AG04450 (cell line): ENCODE measurements at regions of chr6 and their contacts with region 1.

Region 1: GRCh38 chr6:39892490-39893129 is 41.7 kb downstream of the MOCS1 start:
- DNase-seq: peak; percentile 36
- H3K4me3 ChIP-seq: no peak overlapping the region
- H3K27ac ChIP-seq: no peak overlapping the region
- H3K27me3 ChIP-seq: no peaks in the 10 kb centered on the region
- CTCF ChIP-seq: peak; percentile 93

Region 2: DNA sequence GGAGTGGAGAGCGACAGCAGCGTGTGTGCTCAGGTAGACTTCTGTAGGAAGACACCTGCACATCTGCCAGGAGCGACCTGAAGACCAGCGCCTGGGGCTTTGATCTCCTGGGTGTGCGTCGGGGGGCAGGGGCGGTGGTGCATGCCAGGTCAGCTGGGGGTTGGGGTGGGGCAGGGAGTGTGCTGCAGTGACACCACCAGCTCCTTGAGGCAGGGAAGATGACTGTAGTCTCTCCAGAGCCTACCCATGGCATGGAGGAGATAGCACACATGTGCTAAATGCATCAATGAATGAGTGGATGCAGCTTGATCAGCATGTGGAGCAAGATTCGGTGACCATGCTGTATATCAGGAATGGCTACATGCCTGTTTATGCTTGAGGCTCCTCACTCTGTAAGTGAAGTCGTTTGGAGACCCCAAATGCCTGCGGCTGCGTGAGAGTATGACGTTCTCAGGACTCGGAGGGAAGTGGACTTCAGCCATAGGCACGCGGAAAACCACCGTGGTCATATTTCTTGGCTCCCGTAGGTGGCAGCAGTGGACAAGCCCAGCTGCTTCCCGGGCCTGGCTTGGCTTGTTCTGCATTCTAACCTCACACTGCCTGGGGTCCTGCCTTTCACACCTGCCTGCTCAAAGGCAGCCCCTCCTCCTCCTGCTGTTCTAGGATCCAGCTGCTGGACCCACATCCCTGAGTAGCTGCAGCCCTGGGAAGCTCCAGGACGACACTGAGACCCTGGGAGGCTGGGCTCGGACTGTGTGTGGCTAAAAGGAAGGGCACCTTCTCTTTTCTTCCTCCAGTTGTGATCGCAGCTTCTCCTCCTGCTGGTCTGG is 530.7 kb before region 1 on chr6:
- CTCF ChIA-PET with region 1: interaction called, 27 read pairs
- POLR2A ChIA-PET with region 1: no interaction called
- DNase-seq: peak; percentile 16
- H3K4me3 ChIP-seq: no peak overlapping the region
- H3K27ac ChIP-seq: no peak overlapping the region
- H3K27me3 ChIP-seq: no peaks in the 10 kb centered on the region
- CTCF ChIP-seq: peak; percentile 87

Region 3: DNA sequence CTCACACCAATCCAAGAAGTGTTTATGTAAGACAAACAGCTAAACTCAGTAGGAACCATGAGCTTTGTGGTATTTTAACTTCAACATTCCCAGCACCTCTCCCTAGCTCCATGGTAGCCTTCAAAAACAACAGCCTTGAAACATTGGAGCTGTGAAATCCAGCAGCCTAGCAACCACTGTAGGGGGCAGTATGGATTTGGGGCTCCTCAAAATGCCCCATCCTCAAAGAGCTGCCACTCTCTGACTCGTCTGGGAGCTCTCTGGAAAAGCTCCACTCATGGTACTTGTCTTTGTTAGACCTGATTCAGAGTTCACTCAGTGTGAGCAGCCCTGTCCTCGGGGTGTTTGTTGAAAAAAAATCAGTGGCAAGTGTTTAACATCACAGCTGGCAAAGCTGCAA is 250.3 kb before region 1 on chr6:
- CTCF ChIA-PET with region 1: no interaction called
- POLR2A ChIA-PET with region 1: no interaction called
- DNase-seq: no peak
- H3K4me3 ChIP-seq: no peak overlapping the region
- H3K27ac ChIP-seq: no peak overlapping the region
- H3K27me3 ChIP-seq: no peaks in the 10 kb centered on the region
- CTCF ChIP-seq: no peak

Region 4: GRCh38 chr6:39904946-39905639 is 12.5 kb after region 1 on chr6:
- CTCF ChIA-PET with region 1: interaction called, 19 read pairs
- POLR2A ChIA-PET with region 1: no interaction called
- DNase-seq: no peak
- H3K4me3 ChIP-seq: no peak overlapping the region
- H3K27ac ChIP-seq: no peak overlapping the region
- H3K27me3 ChIP-seq: no peaks in the 10 kb centered on the region
- CTCF ChIP-seq: no peak